PC-3 (cell line): ENCODE measurements at regions of chr12 and their contacts with region 1.

Region 1: GRCh38 chr12:124518051-124518932 is 49.1 kb downstream of the NCOR2 start:
- DNase-seq: peak; percentile 99
- ATAC-seq: peak; percentile 70
- H3K4me3 ChIP-seq: peak overlapping the region; percentile 71
- H3K27ac ChIP-seq: peak overlapping the region; percentile 93
- H3K4me1 ChIP-seq: peaks cover 54% of the 10 kb centered on the region
- H3K27me3 ChIP-seq: no peaks in the 10 kb centered on the region
- CTCF ChIP-seq: no peak

Region 2: DNA sequence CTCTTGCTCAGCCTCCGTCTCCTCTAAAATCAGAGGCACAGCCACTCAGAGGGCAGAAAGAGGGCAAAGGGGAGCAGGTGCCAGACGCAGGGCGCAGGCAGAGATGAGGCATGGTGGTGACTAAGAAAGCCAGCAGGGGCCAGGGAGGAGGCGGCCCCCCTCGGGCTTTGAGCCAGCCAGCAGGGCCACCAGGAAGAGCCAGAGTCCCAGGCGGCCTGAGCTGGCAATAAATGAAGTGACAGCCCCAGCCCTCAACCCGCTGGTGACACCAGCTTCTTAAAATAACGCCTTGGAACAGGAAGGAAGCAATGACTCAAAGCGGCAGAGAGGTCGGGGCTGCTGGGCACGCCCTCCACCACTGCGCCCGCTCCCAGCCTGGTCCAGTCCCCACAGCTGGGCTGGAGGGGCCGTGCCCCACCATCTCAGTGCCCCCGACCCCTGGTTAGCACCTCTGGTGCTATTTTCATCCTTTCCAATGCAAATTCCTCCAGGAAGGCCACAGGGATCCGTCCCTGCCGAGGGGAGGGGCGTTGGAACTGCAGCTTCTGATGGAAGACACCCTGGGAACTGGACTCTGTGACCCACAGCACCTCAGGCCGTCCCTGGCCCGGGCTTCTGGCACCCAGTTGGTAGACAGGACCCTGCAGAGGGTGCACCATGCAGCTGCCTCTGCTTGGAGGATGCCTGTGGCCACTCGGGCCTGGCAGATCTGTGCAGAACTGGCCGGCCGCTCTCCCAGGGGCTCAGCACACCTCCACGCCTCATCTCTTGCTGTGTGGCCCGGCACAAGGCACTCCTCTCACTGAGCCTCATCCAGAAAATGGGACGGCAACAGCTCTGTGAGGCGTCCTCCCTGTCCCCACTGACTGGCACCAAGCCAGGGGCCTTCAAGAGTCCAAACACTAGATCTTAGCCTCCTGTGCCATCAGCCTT is 64.6 kb before region 1 on chr12:
- CTCF ChIA-PET with region 1: no interaction called
- POLR2A ChIA-PET with region 1: no interaction called
- intact Hi-C with region 1: loop called (anchors 2 kb)
- DNase-seq: peak; percentile 91
- ATAC-seq: peak; percentile 89
- H3K4me3 ChIP-seq: peak overlapping the region; percentile 13; the same call in 1 of the 2 replicates
- H3K27ac ChIP-seq: peak overlapping the region; percentile 54
- H3K4me1 ChIP-seq: peaks cover 22% of the 10 kb centered on the region
- H3K27me3 ChIP-seq: no peaks in the 10 kb centered on the region
- CTCF ChIP-seq: no peak

Region 3: DNA sequence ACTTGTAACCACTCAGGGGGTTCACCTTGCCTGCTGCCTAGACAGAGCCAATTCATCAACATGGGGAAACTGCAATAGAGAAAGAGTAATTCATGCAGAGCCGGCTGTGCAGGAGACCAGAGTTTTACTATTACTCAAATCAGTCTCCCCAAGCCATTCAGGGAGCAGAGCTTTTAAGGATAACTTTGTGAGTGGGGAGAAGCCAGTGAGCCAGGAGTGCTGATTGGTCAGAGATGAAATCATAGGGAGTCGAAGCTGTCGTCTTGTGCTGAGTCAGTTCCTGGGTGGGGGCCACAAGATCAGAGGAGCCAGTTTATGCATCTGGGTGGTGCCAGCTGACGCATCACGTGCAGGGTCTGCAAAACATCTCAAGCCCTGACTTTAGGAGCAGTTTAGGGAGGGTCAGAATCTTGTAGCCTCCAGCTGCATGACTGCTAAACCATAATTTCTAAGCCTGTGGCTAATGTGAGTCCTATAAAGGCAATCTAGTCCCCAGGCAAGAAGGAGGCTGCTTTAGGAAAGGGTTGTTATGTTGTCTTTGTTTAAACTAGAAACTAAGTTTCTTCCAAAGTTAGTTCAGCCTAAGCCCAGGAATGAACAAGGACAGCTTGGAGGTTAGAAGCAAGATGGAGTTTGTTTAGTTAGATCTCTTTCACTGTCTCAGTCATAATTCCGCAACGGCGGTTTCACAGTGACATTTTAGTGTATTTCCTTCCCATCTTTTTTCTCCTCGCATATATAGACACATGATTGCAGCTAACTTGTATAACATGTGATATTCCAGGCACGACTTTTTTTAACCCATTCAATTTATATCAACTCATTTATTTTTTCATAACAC is 118.1 kb after region 1 on chr12:
- CTCF ChIA-PET with region 1: interaction called, 3 read pairs
- POLR2A ChIA-PET with region 1: interaction called, 24 read pairs
- intact Hi-C with region 1: no loop called
- DNase-seq: peak; percentile 89
- ATAC-seq: peak; percentile 25
- H3K4me3 ChIP-seq: no peak overlapping the region
- H3K27ac ChIP-seq: peak overlapping the region; percentile 56
- H3K4me1 ChIP-seq: peaks cover 46% of the 10 kb centered on the region
- H3K27me3 ChIP-seq: no peaks in the 10 kb centered on the region
- CTCF ChIP-seq: no peak

Region 4: DNA sequence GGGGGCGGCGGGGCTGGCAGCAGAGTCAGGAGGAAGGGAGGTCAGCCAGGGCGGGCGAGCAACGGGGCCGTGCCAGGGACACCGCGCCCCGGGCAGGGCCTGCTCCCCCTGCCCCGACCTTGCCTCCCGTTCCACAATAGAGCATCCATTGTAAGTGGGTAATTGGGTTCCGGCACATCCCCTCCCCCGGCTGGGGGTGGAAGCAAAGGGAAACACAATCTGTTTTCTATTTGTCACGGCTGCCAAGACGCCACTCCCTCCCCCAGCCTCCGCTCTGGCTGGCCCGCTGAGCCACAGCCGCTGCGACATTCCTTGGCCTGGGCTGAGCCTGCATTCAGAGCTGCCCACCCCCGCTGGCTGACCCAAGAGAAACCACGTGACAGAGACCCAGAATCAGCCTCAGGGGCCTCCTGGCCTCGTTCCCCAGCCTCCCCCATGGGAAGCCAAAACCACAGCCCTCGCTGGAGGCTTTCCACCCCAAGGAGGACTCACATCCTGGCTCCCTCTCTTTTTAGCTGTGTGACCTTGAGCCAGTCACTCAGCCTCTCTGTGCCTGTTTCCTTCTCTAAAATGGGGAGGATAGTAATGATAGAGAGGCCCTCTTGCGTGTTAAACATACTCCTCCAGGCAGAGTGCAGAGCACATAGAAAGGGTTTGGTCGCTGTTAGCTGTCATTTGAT is 227.7 kb after region 1 on chr12:
- CTCF ChIA-PET with region 1: interaction called, 3 read pairs
- POLR2A ChIA-PET with region 1: no interaction called
- intact Hi-C with region 1: loop called (anchors 5 kb)
- DNase-seq: peak; percentile 94
- ATAC-seq: peak; percentile 81
- H3K4me3 ChIP-seq: peak overlapping the region; percentile 35; the same call in 1 of the 2 replicates
- H3K27ac ChIP-seq: peak overlapping the region; percentile 79
- H3K4me1 ChIP-seq: peaks cover 36% of the 10 kb centered on the region
- H3K27me3 ChIP-seq: no peaks in the 10 kb centered on the region
- CTCF ChIP-seq: no peak